Activated CD4-positive, alpha-beta T cell treated with anti-CD3 and anti-CD28 coated beads for 36 hours (primary cell): ENCODE measurements at regions of chr18 and their contacts with region 1.

Region 1: DNA sequence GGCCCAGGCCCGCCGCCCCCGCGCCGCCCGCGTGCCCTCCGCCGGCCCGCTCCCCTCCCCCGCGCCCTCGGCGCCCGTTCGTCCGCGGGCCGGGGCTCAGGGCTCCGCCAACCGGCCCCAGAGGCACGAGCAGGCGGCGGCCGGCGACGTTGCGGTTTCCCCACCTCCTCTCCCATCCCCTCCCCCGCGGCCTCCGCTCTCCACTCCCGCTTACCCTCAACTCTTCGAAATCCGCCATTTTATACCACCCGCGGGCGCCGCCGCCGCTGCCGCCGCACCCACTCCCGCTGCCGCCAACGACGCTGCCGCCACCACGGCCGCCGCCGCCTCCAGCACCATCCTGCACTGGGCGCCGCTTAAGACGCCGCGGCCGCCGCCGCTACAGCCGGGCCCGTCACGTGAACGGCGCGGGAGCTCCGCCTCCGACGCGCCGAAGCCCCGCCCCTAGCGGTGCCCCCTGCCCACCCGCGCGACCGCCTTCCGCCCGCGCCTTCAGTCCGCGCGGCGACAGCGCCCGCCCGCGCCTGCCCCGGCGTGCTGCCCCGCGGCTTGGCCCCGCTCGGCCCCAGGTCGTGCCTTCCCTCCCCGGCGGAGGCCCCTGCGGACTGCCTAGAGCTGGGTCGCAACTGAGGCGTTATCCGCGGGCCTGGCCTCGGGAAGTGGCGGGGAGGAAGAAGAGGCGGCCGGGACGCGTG is at the starts of genes KATNAL2 and PIAS2:
- DNase-seq: peak; percentile 83
- ATAC-seq: peak; percentile 92
- H3K4me3 Mint-ChIP-seq: peak within 1 kb of the TSS; percentile 92
- H3K27ac Mint-ChIP-seq: peak within 1 kb of the TSS; percentile 91
- H3K4me1 Mint-ChIP-seq: peaks cover 45% of the 10 kb centered on the region
- H3K27me3 Mint-ChIP-seq: no peaks in the 10 kb centered on the region
- total RNA-seq, gene KATNAL2: 1.1 to 1.4 TPM
- total RNA-seq, gene PIAS2: 27.1 to 28.2 TPM

Region 2: GRCh38 chr18:46104128-46104911 is 812.9 kb before region 1 on chr18 and contains the start of gene HAUS1:
- CTCF ChIA-PET with region 1: no interaction called
- POLR2A ChIA-PET with region 1: no interaction called
- intact Hi-C with region 1: loop called in 1 of 2 experiments (anchors 5 kb)
- DNase-seq: peak; percentile 90
- ATAC-seq: peak; percentile 96
- H3K4me3 Mint-ChIP-seq: peak within 1 kb of the TSS; percentile 95
- H3K27ac Mint-ChIP-seq: peak within 1 kb of the TSS; percentile 95
- H3K4me1 Mint-ChIP-seq: peaks cover 32% of the 10 kb centered on the region
- H3K27me3 Mint-ChIP-seq: no peaks in the 10 kb centered on the region
- total RNA-seq, gene HAUS1: 62.2 to 79.9 TPM

Region 3: DNA sequence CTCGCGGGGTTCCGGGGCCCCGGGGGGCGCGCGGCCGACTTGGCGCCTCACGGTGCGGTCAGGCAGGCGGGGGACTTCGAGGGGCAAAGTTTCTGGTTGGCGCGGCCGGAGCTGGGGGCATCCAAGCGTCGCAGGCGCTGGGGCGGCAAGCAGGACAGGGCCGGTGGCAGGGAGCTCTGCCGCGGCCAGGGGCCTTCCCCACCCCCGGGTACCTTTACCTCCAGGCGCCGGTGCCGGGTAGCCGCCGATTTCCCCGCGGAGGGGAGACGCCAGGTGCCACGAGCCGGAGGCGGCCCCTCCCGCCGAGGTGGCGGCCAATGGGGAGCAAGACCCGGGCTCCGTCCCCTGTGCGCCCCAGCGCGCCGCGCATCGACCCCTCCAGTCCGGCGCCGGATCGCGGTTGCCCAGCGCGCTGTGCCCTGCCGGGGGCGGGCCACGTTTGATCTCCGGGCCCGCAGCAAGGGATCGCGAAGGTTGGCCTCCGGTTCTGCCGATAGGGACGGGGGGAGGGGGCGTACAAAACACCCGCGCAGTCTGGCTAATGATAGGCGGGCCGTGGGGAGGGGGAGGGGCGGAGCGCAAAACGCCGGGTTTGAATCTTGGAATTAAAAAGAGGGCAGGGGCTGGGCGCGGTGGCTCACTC is 160.6 kb before region 1 on chr18 and contains the start of gene ST8SIA5:
- CTCF ChIA-PET with region 1: no interaction called
- POLR2A ChIA-PET with region 1: no interaction called
- intact Hi-C with region 1: loop called in 1 of 2 experiments (anchors 2 kb)
- DNase-seq: peak; percentile 37
- ATAC-seq: peak; percentile 30
- H3K4me3 Mint-ChIP-seq: peak within 1 kb of the TSS; percentile 53
- H3K27ac Mint-ChIP-seq: no peak within 1 kb of the TSS
- H3K4me1 Mint-ChIP-seq: peaks cover 6% of the 10 kb centered on the region
- H3K27me3 Mint-ChIP-seq: peaks cover 54% of the 10 kb centered on the region
- total RNA-seq, gene ST8SIA5: not detected

Region 4: GRCh38 chr18:46809145-46809544 is 108.1 kb before region 1 on chr18:
- CTCF ChIA-PET with region 1: no interaction called
- POLR2A ChIA-PET with region 1: no interaction called
- intact Hi-C with region 1: no loop called
- DNase-seq: no peak
- ATAC-seq: no peak
- H3K4me3 Mint-ChIP-seq: no peak overlapping the region
- H3K27ac Mint-ChIP-seq: no peak overlapping the region
- H3K4me1 Mint-ChIP-seq: no peaks in the 10 kb centered on the region
- H3K27me3 Mint-ChIP-seq: no peaks in the 10 kb centered on the region

Region 5: GRCh38 chr18:46946656-46947282 is 29.5 kb after region 1 on chr18:
- CTCF ChIA-PET with region 1: interaction called, 5 read pairs
- POLR2A ChIA-PET with region 1: no interaction called
- intact Hi-C with region 1: loop called in 1 of 2 experiments (anchors 2 kb)
- DNase-seq: peak; percentile 78
- ATAC-seq: peak; percentile 99
- H3K4me3 Mint-ChIP-seq: no peak overlapping the region
- H3K27ac Mint-ChIP-seq: no peak overlapping the region
- H3K4me1 Mint-ChIP-seq: no peaks in the 10 kb centered on the region
- H3K27me3 Mint-ChIP-seq: peaks cover 8% of the 10 kb centered on the region

Region 6: DNA sequence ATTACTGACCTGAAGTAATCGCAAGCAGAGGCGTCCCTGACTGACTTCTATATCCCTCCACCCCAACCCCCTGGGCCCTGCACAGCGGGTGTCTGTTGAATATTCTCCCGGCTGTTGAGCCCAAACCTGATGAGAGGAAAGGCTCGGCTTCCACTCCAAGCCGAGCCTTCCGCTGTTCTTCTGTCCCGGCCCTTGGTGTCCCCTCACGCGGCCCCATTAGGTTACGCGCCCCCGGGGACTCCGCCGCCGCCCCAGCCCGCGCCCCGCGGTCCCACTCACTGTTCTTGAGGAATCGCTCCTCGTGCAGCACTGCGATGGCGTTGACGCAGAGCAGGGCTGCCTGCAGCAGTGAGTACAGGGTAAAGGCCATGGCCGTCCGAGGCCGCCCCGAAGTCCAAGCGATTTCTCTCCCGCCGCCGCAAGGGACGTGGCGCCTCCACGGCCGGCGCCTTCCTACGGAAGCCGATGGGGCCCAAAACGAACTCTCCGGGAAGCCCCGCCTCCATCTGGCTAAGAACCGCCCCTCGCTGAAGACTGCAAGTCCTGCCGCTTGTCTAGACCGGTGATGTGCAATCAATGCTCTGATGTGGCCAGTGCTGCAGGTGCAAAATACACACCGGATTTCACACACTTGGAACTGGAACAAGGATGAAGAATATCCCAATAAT is 258.8 kb after region 1 on chr18 and contains the start of gene IER3IP1:
- CTCF ChIA-PET with region 1: no interaction called
- POLR2A ChIA-PET with region 1: no interaction called
- intact Hi-C with region 1: loop called in 1 of 2 experiments (anchors 1 kb)
- DNase-seq: peak; percentile 93
- ATAC-seq: peak; percentile 92
- H3K4me3 Mint-ChIP-seq: no peak within 1 kb of the TSS
- H3K27ac Mint-ChIP-seq: peak within 1 kb of the TSS; percentile 40
- H3K4me1 Mint-ChIP-seq: peaks cover 2% of the 10 kb centered on the region
- H3K27me3 Mint-ChIP-seq: no peaks in the 10 kb centered on the region
- total RNA-seq, gene IER3IP1: 9.0 to 11.5 TPM